ENCODE measurements at regions of chr12 and their contacts with region 1.

Region 1: DNA sequence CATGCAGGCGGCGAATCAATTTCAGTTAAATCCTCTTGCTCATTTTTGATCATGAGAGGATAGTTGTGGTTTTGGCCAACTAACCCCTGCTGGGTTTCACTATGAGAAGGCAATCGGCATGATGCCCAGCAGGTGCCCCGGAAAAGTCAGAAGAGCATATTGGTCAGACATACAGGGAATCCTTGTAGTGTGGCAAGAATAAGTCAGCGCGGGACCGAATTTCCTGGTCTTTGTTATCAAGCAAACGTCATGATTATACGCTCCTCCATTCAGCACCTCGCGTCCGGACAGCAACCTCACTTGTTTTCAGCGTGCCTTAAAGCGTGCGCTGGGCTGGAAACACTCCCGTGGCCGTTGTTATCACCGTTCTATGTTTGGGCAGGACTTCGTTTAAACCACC is 1.8 kb downstream of the TBC1D30 start:
- DNase-seq: peak; percentile 66
- ATAC-seq: peak; percentile 57
- H3K4me3 ChIP-seq: peak overlapping the region; percentile 94
- H3K27ac ChIP-seq: no peak overlapping the region
- H3K4me1 ChIP-seq: no peaks in the 10 kb centered on the region
- H3K27me3 ChIP-seq: peaks cover 0 to 2% of the 10 kb centered on the region in 2 experiments; a peak in 2 of 4 replicates
- CTCF ChIP-seq: no peak
- EP300 ChIP-seq: no peak; a peak in 1 of 4 replicates
- POLR2A ChIP-seq: no peak
- RAD21 ChIP-seq: no peak

Region 2: GRCh38 chr12:64099397-64099796 is 726.8 kb before region 1 on chr12:
- CTCF ChIA-PET with region 1: no interaction called
- POLR2A ChIA-PET with region 1: no interaction called
- RAD21 ChIA-PET with region 1: no interaction called
- SMC1A ChIA-PET with region 1: no interaction called
- in situ Hi-C with region 1: no loop called
- intact Hi-C with region 1: no loop called
- DNase-seq: no peak
- ATAC-seq: no peak
- H3K4me3 ChIP-seq: no peak overlapping the region
- H3K27ac ChIP-seq: no peak overlapping the region
- H3K4me1 ChIP-seq: no peaks in the 10 kb centered on the region
- H3K27me3 ChIP-seq: no peaks in the 10 kb centered on the region
- CTCF ChIP-seq: no peak
- EP300 ChIP-seq: no peak
- POLR2A ChIP-seq: no peak
- RAD21 ChIP-seq: no peak

Region 3: DNA sequence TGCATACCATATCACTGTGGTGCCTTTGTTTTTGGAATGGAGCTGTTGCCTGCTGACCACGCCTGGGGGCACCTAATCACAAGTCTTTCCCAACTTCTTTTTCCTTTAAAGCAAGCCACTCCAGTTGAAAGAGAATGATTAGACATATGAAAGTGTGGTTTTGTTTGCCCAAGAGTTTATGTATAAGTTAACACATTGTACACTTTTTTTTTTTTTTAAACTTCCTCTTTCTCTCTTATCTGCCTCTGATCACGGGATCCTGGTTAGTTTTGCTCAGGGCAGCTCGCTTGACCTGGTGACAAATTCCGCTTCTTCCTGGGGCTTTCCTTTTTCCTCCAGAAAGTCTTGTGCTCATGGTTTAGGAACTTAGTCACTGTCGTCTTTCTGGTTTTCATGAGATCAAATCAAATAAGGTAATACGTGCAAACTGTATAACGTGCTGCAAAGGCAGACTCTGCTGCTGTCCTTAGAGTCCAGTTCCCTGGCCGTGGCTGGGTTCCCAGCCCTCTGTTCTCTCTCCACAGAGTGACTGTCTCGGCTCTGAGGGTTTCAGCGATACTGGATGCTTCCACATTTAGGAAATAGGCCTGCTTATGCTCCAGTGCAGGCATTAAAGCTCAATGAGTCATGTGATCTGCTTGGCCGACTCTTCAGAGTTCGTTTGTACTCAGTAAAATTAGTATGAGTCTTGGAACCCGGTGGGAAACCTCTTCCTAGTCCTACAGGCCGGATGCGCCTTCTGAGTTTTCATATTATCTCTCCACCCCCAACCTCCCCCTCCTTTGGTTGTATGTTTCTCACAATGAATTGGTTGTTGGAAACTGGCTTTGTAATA is 200.8 kb before region 1 on chr12:
- CTCF ChIA-PET with region 1: no interaction called
- POLR2A ChIA-PET with region 1: no interaction called
- RAD21 ChIA-PET with region 1: no interaction called
- SMC1A ChIA-PET with region 1: no interaction called
- in situ Hi-C with region 1: no loop called
- intact Hi-C with region 1: no loop called
- DNase-seq: peak; percentile 78
- ATAC-seq: peak; percentile 64
- H3K4me3 ChIP-seq: peak overlapping the region; percentile 66
- H3K27ac ChIP-seq: peak overlapping the region; percentile 98
- H3K4me1 ChIP-seq: peaks cover 39% of the 10 kb centered on the region
- H3K27me3 ChIP-seq: no peaks in the 10 kb centered on the region
- CTCF ChIP-seq: 0 out of 6 replicates have a peak, but pooled peaks of 1 of the 3 experiments have one; percentile 6
- EP300 ChIP-seq: peak in 1 of 2 experiments; percentile 76; a peak in 2 of 4 replicates
- POLR2A ChIP-seq: peak; percentile 44; the same call in 1 of the 2 replicates
- RAD21 ChIP-seq: no peak

Region 4: DNA sequence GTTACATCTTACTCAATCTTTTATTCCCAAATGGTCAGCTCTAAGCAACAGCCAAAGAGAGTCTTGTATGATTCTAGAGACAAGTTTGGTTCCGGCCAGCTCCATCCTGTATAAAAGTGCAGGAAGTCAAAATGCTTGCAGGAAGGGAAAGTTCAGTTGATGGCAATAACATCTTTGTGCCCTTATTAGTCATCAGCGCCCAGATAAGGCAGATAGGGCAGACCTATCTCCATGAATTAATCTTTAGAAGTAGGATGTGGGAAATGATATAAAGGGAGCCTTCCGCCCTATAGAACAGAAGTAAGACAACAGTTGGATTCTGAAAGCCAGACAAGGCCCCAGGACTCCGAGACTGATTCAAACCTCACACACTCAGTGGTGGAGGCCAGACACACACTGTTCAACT is 73.4 kb before region 1 on chr12:
- CTCF ChIA-PET with region 1: no interaction called
- POLR2A ChIA-PET with region 1: no interaction called
- RAD21 ChIA-PET with region 1: no interaction called
- SMC1A ChIA-PET with region 1: no interaction called
- in situ Hi-C with region 1: no loop called
- intact Hi-C with region 1: no loop called
- DNase-seq: no peak
- ATAC-seq: no peak
- H3K4me3 ChIP-seq: no peak overlapping the region
- H3K27ac ChIP-seq: no peak overlapping the region
- H3K4me1 ChIP-seq: peaks cover 8% of the 10 kb centered on the region
- H3K27me3 ChIP-seq: no peaks in the 10 kb centered on the region
- CTCF ChIP-seq: no peak
- EP300 ChIP-seq: no peak
- POLR2A ChIP-seq: no peak
- RAD21 ChIP-seq: no peak

Region 5: DNA sequence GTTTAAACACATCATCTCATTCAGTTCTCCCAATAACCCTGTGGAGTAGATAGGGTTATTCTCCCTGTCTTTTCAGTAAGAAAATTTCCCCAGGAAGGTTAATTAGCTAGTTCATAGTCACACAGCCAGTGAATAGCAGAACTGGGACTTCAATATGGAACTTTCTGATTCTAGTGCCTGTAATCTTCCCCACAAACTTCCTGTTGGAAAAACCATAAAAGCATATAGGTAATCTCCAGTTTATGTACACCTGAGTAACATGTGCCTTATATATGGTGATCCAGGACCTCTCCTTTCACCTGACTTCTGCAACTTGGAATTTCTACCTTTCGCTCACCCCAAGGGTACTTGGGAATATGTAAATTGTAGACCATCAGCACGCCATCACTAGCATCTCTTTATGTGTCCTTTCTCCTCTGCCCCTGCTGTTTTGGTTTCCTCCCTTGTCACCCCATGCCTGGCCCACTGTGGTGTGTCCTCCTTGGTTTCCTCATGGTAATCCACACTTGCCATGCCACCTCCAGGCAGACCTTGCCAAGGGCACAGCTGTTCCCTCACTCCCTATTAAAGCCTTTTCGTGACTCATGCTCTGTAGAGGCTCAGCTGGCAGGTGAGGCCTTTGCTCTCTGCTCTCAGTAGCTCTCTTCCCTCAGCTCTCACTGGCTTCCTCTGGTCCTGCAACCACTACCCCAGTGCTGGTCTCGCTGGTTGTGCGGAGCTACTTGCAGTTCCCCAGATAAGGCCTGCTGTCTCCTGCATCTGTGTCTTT is 14.9 kb after region 1 on chr12:
- CTCF ChIA-PET with region 1: interaction called, 3 read pairs
- POLR2A ChIA-PET with region 1: interaction called, 3 read pairs
- RAD21 ChIA-PET with region 1: no interaction called
- SMC1A ChIA-PET with region 1: interaction called, 13 read pairs
- in situ Hi-C with region 1: no loop called
- intact Hi-C with region 1: no loop called
- DNase-seq: no peak
- ATAC-seq: no peak
- H3K4me3 ChIP-seq: no peak overlapping the region
- H3K27ac ChIP-seq: no peak overlapping the region
- H3K4me1 ChIP-seq: no peaks in the 10 kb centered on the region
- H3K27me3 ChIP-seq: no peaks in the 10 kb centered on the region
- CTCF ChIP-seq: no peak
- EP300 ChIP-seq: no peak
- POLR2A ChIP-seq: no peak
- RAD21 ChIP-seq: no peak

Region 6: GRCh38 chr12:64864319-64864718 is 38.1 kb after region 1 on chr12:
- CTCF ChIA-PET with region 1: no interaction called
- POLR2A ChIA-PET with region 1: no interaction called
- RAD21 ChIA-PET with region 1: interaction called, 3 read pairs
- SMC1A ChIA-PET with region 1: interaction called, 4 read pairs
- in situ Hi-C with region 1: no loop called
- intact Hi-C with region 1: loop called (anchors 5 kb)
- DNase-seq: no peak
- ATAC-seq: 0 out of 3 replicates have a peak, but pooled peaks have one; percentile 23
- H3K4me3 ChIP-seq: no peak overlapping the region
- H3K27ac ChIP-seq: no peak overlapping the region
- H3K4me1 ChIP-seq: peaks cover 23% of the 10 kb centered on the region
- H3K27me3 ChIP-seq: no peaks in the 10 kb centered on the region
- CTCF ChIP-seq: no peak
- EP300 ChIP-seq: no peak
- POLR2A ChIP-seq: no peak
- RAD21 ChIP-seq: no peak

Region 7: GRCh38 chr12:64883596-64884542 is 57.6 kb after region 1 on chr12:
- CTCF ChIA-PET with region 1: interaction called, 10 read pairs
- POLR2A ChIA-PET with region 1: interaction called, 5 read pairs
- RAD21 ChIA-PET with region 1: interaction called, 11 read pairs
- SMC1A ChIA-PET with region 1: interaction called, 6 read pairs
- in situ Hi-C with region 1: no loop called
- intact Hi-C with region 1: loop called (anchors 2 kb)
- DNase-seq: no peak
- ATAC-seq: peak; percentile 59
- H3K4me3 ChIP-seq: peak overlapping the region; percentile 28; the same call in 1 of the 2 replicates
- H3K27ac ChIP-seq: peak overlapping the region; percentile 98
- H3K4me1 ChIP-seq: peaks cover 41% of the 10 kb centered on the region
- H3K27me3 ChIP-seq: no peaks in the 10 kb centered on the region
- CTCF ChIP-seq: no peak
- EP300 ChIP-seq: no peak
- POLR2A ChIP-seq: no peak
- RAD21 ChIP-seq: no peak; the same call in 1 of the 2 replicates

Measured in GM12878 (cell line).